ENCODE measurements at regions of chr9 and their contacts with region 1.

Region 1: GRCh38 chr9:112905084-112905483 is 14.4 kb upstream of the SLC46A2 start:
- DNase-seq: no peak
- ATAC-seq: no peak
- H3K4me3 ChIP-seq: no peak overlapping the region
- H3K27ac ChIP-seq: no peak overlapping the region
- H3K4me1 ChIP-seq: no peaks in the 10 kb centered on the region
- H3K27me3 ChIP-seq: no peaks in the 10 kb centered on the region
- CTCF ChIP-seq: no peak
- POLR2A ChIP-seq: no peak

Region 2: DNA sequence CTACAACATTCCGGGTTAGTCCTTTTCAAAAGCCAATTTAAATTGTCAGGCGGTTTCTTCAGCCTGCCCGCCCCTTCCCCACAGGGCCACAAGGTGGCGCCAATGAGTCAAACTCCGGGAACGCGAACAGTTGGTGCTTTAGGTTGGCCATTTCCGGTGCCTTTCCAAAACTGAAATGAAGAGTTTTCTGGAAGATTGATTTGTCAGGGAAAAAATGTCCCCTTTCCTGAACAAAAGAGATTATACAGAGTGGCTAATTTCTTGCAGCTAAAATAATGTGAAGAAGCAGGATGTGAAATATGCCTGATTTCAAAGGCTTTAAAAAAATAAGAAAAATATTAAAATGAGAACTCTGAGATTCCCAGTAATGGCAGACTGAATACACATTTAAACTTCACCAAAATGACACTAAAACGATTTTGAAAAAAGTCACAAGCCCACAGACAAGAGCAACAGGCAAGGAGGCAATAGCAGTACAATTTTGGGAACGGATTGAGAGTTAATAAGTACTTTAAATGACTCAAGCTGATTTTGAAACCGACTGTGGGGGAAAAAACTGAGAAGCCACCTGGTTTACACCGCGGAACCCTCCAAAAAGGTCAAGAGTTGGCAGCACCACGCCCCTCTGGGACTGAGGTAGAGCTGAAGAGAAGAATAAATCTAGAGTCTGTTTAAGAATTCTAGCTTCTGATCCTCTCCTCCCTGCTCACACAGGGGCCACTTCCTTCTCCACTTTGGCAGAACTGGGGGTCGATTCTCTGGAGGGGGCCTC is 60.1 kb before region 1 on chr9:
- intact Hi-C with region 1: loop called (anchors 10 kb)
- DNase-seq: peak; percentile 76 to 83 (median 83)
- ATAC-seq: peak; percentile 91 to 98 (median 94)
- H3K4me3 ChIP-seq: no peak overlapping the region
- H3K27ac ChIP-seq: no peak overlapping the region
- H3K4me1 ChIP-seq: no peaks in the 10 kb centered on the region
- H3K27me3 ChIP-seq: no peaks in the 10 kb centered on the region
- CTCF ChIP-seq: peak; percentile 92 to 99 (median 98)
- POLR2A ChIP-seq: no peak

Region 3: DNA sequence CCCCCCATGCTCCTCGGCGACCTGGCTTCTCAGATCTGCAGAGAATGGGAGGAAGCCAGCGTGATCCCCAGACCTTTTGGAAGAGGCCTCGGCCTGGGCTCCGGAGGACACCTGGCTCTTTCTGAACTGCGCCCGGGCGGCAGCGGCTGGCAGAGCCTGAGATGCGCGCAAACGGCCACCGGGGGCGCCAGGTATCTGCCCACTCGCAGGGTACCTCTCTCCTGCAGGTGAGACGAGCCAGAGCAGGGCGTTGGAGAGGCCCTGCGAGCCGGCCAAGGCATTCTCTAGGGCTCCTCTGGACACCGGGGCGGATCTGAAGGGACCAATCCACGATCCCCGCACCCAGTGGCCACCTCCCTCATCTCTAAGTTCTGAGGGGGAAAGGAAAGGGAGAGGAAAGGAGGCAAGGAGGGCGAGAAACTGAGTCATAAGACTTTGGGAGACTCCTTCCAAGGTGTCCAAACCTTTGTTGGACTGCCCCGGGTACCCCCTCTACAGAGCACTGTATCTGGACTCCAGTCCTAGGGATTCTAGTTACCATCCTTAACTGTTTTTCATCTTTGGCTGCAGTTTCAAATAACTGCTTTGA is 40.6 kb after region 1 on chr9:
- intact Hi-C with region 1: no loop called
- DNase-seq: no peak
- ATAC-seq: no peak
- H3K4me3 ChIP-seq: no peak overlapping the region
- H3K27ac ChIP-seq: no peak overlapping the region
- H3K4me1 ChIP-seq: no peaks in the 10 kb centered on the region
- H3K27me3 ChIP-seq: no peaks in the 10 kb centered on the region
- CTCF ChIP-seq: no peak
- POLR2A ChIP-seq: no peak

Measured in right lobe of liver (tissue), 6 donors.